Activated CD4-positive, alpha-beta T cell treated with anti-CD3 and anti-CD28 coated beads for 36 hours (primary cell): ENCODE measurements at regions of chr19 and their contacts with region 1.

Region 1: GRCh38 chr19:8355631-8356402 is 8.1 kb upstream of the ANGPTL4 start:
- DNase-seq: no peak
- ATAC-seq: no peak
- H3K4me3 Mint-ChIP-seq: no peak overlapping the region
- H3K27ac Mint-ChIP-seq: no peak overlapping the region
- H3K4me1 Mint-ChIP-seq: peaks cover 6% of the 10 kb centered on the region
- H3K27me3 Mint-ChIP-seq: peaks cover 9% of the 10 kb centered on the region

Region 2: GRCh38 chr19:8342684-8343482 is 12.9 kb before region 1 on chr19 and contains the start of gene KANK3:
- CTCF ChIA-PET with region 1: interaction called, 37 read pairs
- POLR2A ChIA-PET with region 1: no interaction called
- intact Hi-C with region 1: no loop called
- DNase-seq: peak; percentile 96
- ATAC-seq: peak; percentile 100
- H3K4me3 Mint-ChIP-seq: peak within 1 kb of the TSS; percentile 64
- H3K27ac Mint-ChIP-seq: no peak within 1 kb of the TSS
- H3K4me1 Mint-ChIP-seq: peaks cover 6% of the 10 kb centered on the region
- H3K27me3 Mint-ChIP-seq: peaks cover 12% of the 10 kb centered on the region
- total RNA-seq, gene KANK3: 0.98 to 1.1 TPM

Region 3: GRCh38 chr19:8396563-8397203 is 40.9 kb after region 1 on chr19:
- CTCF ChIA-PET with region 1: interaction called, 23 read pairs
- POLR2A ChIA-PET with region 1: no interaction called
- intact Hi-C with region 1: loop called (anchors 1 kb)
- DNase-seq: peak; percentile 91
- ATAC-seq: peak; percentile 96
- H3K4me3 Mint-ChIP-seq: no peak overlapping the region
- H3K27ac Mint-ChIP-seq: peak overlapping the region; percentile 76
- H3K4me1 Mint-ChIP-seq: peaks cover 30% of the 10 kb centered on the region
- H3K27me3 Mint-ChIP-seq: no peaks in the 10 kb centered on the region

Region 4: DNA sequence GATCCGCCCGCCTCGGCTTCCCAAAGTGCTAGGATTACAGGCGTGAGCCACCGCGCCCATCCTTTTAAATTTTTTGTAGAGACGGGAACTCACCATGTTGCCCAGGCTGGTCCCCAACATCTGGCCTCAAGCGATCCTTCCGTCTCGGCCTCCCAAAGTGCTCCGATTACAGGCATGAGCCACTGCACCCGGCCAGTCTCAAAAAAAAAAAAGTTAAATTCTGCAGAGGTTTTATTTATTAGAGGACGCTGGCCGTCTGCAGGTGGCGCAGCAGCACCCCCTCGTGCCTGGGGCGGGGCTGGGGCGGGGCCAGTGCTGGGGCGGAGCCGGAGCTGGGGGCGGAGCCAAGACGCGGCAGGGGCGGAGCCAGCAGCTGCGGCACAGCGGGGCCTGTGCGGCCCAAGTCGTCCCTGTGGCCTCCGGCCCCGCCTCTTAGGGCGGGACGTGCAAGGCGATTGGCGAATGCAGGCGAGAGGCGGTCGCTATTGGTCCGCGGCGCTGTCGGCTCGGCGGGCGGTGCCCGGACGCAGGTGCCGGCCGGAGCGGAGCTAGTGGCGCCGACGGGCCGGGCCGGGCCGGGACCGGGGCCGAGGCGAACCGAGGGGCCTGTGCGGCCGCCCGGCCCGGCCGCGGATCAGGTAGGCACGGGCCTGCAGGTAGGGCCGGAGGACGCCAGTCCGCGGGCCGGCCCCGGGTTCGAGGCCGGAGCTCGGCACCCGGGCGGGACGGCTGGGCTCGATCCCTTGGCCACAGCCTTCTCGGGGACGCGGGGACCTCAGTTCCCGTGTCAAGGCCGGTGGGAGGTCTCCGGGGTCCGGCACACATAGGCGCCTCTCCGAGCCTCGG is 57.2 kb after region 1 on chr19 and contains the start of gene MARCHF2:
- CTCF ChIA-PET with region 1: interaction called, 11 read pairs
- POLR2A ChIA-PET with region 1: no interaction called
- intact Hi-C with region 1: no loop called
- DNase-seq: peak; percentile 97
- ATAC-seq: peak; percentile 100
- H3K4me3 Mint-ChIP-seq: peak within 1 kb of the TSS; percentile 50
- H3K27ac Mint-ChIP-seq: no peak within 1 kb of the TSS
- H3K4me1 Mint-ChIP-seq: peaks cover 5% of the 10 kb centered on the region
- H3K27me3 Mint-ChIP-seq: no peaks in the 10 kb centered on the region
- total RNA-seq, gene MARCHF2: 9.1 to 10.1 TPM

Region 5: DNA sequence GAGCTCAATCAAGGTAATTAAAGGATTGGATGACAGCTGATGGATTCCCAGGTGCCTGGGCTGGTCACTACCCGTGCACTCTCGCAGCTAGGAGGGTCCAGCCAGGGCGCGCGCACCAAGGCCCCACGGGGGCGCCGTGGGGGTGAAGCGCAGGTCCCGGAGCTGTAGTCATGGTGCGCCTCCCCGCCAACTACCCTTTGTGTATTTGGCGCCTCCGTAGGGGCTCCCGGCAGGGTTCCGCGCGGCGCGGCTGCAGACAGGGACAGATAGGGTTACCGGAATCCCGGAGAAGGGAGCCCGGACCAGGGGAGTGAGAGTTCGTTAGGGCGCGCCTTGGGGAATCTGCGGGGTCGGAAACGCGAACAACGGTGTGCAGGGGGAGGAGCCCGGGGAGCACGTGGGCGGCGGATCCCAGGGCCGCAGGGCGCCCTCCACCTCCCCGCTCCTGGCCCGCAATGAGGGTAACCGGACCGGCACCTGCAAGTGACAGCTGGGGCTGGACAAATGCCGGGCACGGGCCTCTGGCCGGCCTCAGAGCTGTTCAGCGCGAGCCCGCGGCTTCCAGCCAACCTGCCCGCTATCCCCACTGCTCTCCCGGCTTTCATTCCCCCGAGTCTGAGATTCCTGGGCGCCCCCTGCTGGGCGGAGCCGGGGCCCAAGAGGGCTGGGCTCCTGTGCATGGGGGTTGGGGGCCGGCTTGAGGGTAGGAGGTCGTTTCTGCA is 150.0 kb after region 1 on chr19:
- CTCF ChIA-PET with region 1: interaction called, 4 read pairs
- POLR2A ChIA-PET with region 1: no interaction called
- intact Hi-C with region 1: loop called (anchors 1 to 10 kb)
- DNase-seq: peak; percentile 87
- ATAC-seq: peak; percentile 79
- H3K4me3 Mint-ChIP-seq: peak overlapping the region; percentile 80
- H3K27ac Mint-ChIP-seq: peak overlapping the region; percentile 80
- H3K4me1 Mint-ChIP-seq: peaks cover 18% of the 10 kb centered on the region
- H3K27me3 Mint-ChIP-seq: no peaks in the 10 kb centered on the region